ENCODE measurements at regions of chr3 and their contacts with region 1.

Region 1: DNA sequence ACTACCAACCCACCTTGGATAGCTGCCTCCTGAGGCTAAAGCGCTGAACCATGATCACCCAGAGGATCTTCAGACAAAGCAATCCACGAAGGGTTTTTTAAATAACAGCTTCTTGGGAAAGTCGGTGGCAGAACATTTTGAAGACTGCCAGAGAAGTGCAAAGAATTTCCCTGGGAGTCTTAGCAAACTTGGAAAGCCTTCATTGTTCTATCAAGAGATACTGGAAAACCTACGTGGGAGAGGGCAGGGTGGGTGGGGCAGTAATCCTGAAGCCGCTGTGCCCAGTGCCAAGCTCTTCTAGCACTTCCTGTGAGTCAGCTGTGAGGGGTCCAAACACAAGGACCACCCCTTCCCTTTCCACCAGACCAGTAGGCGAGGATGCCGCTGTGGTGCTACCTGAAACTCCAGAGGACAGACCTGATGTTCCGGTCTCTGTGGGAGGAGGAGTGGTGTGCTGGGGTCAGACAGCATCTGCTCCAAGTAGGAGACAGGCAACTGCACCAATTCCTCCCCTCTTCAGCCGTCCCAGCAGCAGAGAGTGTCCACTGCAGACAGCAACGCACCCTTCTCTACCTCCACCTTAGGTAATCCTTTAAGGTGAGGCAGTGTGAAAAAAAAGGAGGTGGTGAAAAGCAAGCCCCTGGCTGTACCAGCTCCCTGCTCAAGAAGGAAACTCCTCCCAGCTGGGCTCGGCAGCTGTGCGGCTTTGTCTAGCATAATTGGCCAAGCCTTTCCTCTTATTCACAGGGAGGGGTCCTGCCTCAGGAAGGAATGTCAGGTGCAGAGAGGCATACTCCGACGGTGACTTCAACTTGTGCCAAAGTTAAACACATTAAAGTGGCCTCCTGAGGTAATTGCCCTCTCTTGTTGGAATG is 99.0 kb downstream of the TMCC1 start:
- DNase-seq: peak; percentile 92
- ATAC-seq: peak; percentile 80
- H3K4me3 ChIP-seq: peak overlapping the region; percentile 90
- H3K27ac ChIP-seq: peak overlapping the region; percentile 99
- H3K4me1 ChIP-seq: peaks cover 36% of the 10 kb centered on the region
- H3K27me3 ChIP-seq: no peaks in the 10 kb centered on the region
- CTCF ChIP-seq: no peak

Region 2: GRCh38 chr3:129756871-129757270 is 37.7 kb before region 1 on chr3:
- CTCF ChIA-PET with region 1: no interaction called
- POLR2A ChIA-PET with region 1: no interaction called
- intact Hi-C with region 1: loop called (anchors 2 kb)
- DNase-seq: peak; percentile 58
- ATAC-seq: peak; percentile 69
- H3K4me3 ChIP-seq: no peak overlapping the region
- H3K27ac ChIP-seq: peak overlapping the region; percentile 18; the same call in 1 of the 2 replicates
- H3K4me1 ChIP-seq: peaks cover 10% of the 10 kb centered on the region
- H3K27me3 ChIP-seq: no peaks in the 10 kb centered on the region
- CTCF ChIP-seq: no peak